Activated CD4-positive, alpha-beta memory T cell treated with anti-CD3 and anti-CD28 coated beads, Interleukin-2, amount 10 ng/mL, durations not matched to agents 7 days and 5 days (primary cell): ENCODE measurements at regions of chr11 and their contacts with region 1.

Region 1: DNA sequence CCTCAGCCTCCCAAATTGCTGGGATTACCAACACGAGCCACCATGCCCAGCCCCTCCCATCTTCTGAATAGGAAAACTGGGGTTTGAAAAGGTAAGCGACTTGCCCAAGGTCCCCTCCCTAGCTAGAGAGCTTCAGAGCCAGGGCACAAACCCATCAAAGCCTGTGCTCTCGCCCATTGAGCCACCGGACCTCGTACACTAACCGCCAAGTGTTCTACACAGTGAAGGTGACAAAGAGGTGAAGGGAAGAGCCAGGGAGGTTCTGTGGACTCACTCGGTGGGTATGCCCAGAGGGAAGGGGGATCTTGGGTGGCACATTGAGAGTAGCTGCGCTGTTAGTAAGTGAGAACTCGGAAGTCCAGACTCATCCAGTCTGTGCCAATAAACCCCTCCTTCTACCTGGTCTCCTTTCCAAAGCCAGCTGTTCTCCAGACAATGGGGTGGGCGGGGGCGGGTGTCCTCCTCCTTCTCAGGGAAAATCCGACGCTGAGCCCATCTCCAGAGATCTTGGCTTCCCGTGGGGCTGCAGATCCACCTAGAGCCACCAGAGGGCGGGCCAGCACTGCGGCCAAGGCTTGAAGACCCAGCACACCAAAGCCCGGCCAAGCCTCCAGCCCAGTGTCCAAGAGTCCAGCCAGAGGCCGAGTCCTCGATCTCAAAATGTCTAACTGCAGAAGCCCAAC is 3.2 kb upstream of the RTN4RL2 start:
- DNase-seq: peak; percentile 75
- H3K4me3 Mint-ChIP-seq: peak overlapping the region; percentile 34
- H3K27ac Mint-ChIP-seq: no peak overlapping the region
- H3K4me1 Mint-ChIP-seq: peaks cover 32% of the 10 kb centered on the region
- H3K27me3 Mint-ChIP-seq: peaks cover 42% of the 10 kb centered on the region

Region 2: GRCh38 chr11:57345555-57346211 is 111.4 kb before region 1 on chr11:
- CTCF ChIA-PET with region 1: interaction called, 26 read pairs
- POLR2A ChIA-PET with region 1: no interaction called
- DNase-seq: peak; percentile 67
- H3K4me3 Mint-ChIP-seq: no peak overlapping the region
- H3K27ac Mint-ChIP-seq: no peak overlapping the region
- H3K4me1 Mint-ChIP-seq: peaks cover 2% of the 10 kb centered on the region
- H3K27me3 Mint-ChIP-seq: peaks cover 5% of the 10 kb centered on the region

Region 3: GRCh38 chr11:57438345-57439285 is 18.5 kb before region 1 on chr11:
- CTCF ChIA-PET with region 1: interaction called, 20 read pairs
- POLR2A ChIA-PET with region 1: no interaction called
- DNase-seq: no peak
- H3K4me3 Mint-ChIP-seq: no peak overlapping the region
- H3K27ac Mint-ChIP-seq: no peak overlapping the region
- H3K4me1 Mint-ChIP-seq: no peaks in the 10 kb centered on the region
- H3K27me3 Mint-ChIP-seq: peaks cover 5% of the 10 kb centered on the region

Region 4: DNA sequence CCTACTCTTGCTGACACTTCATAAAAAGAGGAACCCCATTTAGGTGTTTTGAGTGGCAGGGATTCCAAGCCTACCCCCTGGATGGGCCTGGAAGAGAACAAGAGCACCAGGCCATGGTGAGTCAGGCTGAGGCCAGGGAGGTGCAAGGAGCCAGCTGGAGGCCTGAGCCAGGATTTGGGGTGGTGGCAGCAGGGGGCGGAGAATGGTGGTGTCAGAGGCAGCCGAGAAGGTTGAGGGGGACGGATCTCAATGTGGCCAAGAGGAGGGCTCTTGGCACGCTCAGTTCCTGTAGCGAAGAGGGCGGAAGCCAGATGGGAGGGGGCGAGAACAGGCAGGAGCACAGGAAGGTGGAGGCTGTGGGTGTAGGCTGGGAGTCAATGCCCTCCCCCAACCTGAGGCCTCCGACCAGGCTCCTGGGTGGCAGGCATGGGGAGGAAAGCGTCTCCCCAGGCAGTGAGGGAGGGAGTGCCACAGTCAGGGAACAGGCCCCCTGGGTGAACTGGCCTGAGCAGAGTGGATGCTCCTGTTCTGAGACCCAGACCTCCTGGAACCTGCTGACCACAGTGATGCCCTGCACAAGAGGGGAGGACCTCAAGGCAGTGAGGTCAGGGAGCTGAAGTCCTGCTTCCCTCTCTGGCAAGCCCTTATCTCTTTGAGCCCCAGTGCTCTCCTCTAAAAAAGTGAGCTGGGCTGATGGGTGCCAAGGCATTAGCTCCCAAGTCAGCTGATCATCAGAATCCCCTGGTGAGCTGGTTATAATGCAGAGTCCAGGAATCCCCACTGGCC is 17.1 kb after region 1 on chr11:
- CTCF ChIA-PET with region 1: interaction called, 32 read pairs
- POLR2A ChIA-PET with region 1: interaction called, 5 read pairs
- DNase-seq: peak; percentile 51
- H3K4me3 Mint-ChIP-seq: no peak overlapping the region
- H3K27ac Mint-ChIP-seq: no peak overlapping the region
- H3K4me1 Mint-ChIP-seq: peaks cover 33% of the 10 kb centered on the region
- H3K27me3 Mint-ChIP-seq: peaks cover 44% of the 10 kb centered on the region

Region 5: DNA sequence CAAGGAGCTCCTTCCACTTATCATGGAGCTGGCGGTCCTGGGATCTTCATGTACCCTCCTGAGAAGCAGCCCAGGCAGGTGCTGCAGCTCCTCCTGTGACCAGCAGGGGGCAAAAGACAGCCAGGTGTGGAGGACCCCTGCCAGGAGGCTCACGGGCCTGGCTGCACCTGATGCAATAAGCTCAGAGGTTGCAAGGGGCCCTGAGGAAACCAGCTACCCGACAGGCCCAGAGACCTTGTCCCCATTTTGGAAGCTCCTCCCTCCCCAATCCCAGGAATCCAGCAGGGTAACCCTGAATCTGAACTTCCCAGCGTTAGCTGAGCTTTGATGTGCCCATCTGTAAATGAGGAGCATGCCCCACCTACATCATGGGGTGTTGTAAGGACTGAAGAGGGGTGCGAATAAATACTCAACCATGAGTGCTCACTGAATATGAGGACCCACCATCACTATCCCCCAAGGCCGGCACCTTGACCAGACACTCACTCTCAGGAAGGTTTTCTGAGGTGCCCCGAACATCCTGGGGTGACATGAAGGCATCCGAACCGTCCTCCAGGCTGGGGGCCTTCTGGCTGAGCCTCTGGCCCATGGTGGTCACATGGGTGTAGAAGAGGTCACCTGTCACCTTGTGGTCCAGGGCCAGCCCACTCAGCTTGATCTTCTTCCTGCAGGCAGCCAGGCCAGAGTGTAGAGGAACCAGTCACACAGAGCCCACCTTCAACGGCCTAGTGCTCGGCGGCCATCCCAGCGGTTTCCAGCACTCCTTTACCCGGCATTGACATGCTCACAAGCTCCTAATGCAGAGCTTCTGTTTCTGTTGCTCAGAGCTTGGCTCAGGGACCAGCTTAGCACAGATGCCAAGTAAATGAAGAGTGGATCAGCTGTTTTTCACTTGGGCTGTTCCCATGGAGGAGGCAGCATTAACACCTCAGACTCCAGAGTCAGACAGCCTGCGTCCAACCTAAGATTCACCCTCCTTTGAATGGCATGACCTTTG is 36.7 kb after region 1 on chr11:
- CTCF ChIA-PET with region 1: interaction called, 37 read pairs
- POLR2A ChIA-PET with region 1: no interaction called
- DNase-seq: peak; percentile 76
- H3K4me3 Mint-ChIP-seq: no peak overlapping the region
- H3K27ac Mint-ChIP-seq: peak overlapping the region; percentile 73
- H3K4me1 Mint-ChIP-seq: peaks cover 12% of the 10 kb centered on the region
- H3K27me3 Mint-ChIP-seq: no peaks in the 10 kb centered on the region

Region 6: DNA sequence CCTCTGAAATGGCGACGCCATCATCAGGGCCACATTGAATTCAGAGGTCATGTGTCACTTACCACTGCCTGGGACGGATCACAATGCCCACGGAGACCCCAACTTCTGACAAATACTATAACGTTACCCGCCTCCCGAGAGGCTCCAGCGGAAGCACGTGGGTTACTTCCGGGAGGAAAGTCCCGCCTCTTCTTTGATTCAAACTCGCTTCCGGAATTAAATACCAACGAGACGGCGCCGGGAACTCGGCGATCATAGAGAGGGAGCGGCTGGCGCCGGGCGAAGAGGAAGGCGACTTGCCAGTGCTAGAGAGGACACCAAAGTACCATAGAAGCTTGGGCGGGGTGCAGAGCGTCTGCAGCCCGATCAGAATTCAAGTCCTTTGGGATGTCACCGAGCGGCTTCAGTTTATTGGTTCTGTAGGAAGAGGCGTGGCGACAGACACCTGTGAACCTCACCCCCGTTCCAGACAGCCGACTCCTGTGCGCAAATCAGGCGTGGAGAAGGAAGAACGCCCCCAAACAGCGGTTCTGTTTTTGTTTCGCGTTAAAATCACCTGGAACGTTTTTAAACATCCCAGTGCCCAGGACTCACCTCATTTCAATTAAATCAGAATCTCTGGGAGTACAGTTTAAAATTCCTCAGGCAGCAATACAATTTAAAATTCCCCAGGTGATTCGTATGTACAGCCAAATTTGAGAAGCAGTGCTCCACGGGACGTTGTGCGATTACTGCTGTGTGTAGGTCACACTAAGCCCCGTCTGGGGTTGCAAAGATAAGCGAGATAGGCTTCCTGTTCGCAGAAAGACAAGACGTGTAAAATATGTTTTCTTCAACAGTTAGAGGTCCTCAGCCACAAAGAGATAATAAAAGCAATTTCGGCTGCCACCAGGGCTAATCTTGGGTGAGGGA is 73.8 kb after region 1 on chr11 and contains the start of gene TIMM10:
- CTCF ChIA-PET with region 1: interaction called, 102 read pairs
- POLR2A ChIA-PET with region 1: interaction called, 5 read pairs
- DNase-seq: peak; percentile 96
- H3K4me3 Mint-ChIP-seq: peak within 1 kb of the TSS; percentile 84
- H3K27ac Mint-ChIP-seq: peak within 1 kb of the TSS; percentile 90
- H3K4me1 Mint-ChIP-seq: peaks cover 44% of the 10 kb centered on the region
- H3K27me3 Mint-ChIP-seq: no peaks in the 10 kb centered on the region
- total RNA-seq, gene TIMM10: 82.4 to 86.1 TPM